ENCODE measurements at regions of chr9 and their contacts with region 1.

Region 1: GRCh38 chr9:68507130-68507805 is 33.4 kb downstream of the TMEM252 start:
- DNase-seq: no peak
- ATAC-seq: peak in 2 of 4 donors; percentile 25 to 34
- H3K4me3 ChIP-seq: no peak overlapping the region
- H3K27ac ChIP-seq: peak overlapping the region in 10 of 12 donors; percentile 2 to 75 (median 60)
- H3K4me1 ChIP-seq: peaks cover 0 to 53% (median 28%) of the 10 kb centered on the region in 12 donors
- H3K27me3 ChIP-seq: no peaks in the 10 kb centered on the region
- CTCF ChIP-seq: peak; percentile 54 to 78 (median 72)
- POLR2A ChIP-seq: no peak

Region 2: DNA sequence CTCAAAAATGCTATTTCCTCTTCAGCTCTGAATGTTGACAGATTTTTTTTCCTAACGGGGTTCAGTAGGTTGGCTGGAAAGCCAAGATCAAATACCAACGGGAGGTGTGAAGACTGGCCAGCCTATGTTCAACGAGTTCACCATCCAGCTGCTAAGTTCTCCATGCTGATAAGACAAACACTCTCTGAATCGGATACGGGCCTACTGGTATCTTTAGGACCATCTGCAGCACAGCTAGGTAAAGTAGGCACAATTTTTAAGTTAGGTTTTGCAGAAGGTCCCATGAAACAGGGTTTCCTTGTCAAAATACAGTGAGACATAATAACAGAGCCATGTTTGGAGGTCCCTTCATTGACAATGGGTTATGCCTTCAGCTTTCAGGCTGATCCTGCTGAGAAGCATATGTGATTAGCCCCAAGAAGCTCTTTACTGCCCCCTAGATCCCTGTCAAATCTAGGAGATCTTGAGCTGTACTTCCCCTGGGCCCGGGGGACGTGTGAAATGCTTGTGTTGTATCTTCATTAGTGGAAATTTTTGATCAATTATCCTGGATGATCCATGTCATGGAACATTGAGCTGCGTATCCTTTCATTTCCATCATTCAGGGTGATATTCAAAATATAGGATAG is 90.2 kb before region 1 on chr9:
- intact Hi-C with region 1: loop called in 2 of 10 experiments (anchors 5 to 10 kb)
- DNase-seq: no peak
- ATAC-seq: no peak
- H3K4me3 ChIP-seq: no peak overlapping the region
- H3K27ac ChIP-seq: peak overlapping the region; percentile 34 to 93 (median 86)
- H3K4me1 ChIP-seq: peaks cover 0 to 52% (median 17%) of the 10 kb centered on the region in 12 donors
- H3K27me3 ChIP-seq: no peaks in the 10 kb centered on the region
- CTCF ChIP-seq: peak in 7 of 12 donors; percentile 10 to 30 (median 23)
- POLR2A ChIP-seq: no peak

Region 3: GRCh38 chr9:68437785-68438184 is 69.5 kb before region 1 on chr9:
- intact Hi-C with region 1: loop called in 1 of 10 experiments (anchors 5 kb)
- DNase-seq: peak; percentile 67 to 87 (median 81)
- ATAC-seq: peak; percentile 96 to 97 (median 96)
- H3K4me3 ChIP-seq: no peak overlapping the region
- H3K27ac ChIP-seq: peak overlapping the region in 10 of 12 donors; percentile 6 to 78 (median 50)
- H3K4me1 ChIP-seq: peaks cover 0 to 25% (median 16%) of the 10 kb centered on the region in 12 donors
- H3K27me3 ChIP-seq: no peaks in the 10 kb centered on the region
- CTCF ChIP-seq: no peak
- POLR2A ChIP-seq: no peak

Region 4: DNA sequence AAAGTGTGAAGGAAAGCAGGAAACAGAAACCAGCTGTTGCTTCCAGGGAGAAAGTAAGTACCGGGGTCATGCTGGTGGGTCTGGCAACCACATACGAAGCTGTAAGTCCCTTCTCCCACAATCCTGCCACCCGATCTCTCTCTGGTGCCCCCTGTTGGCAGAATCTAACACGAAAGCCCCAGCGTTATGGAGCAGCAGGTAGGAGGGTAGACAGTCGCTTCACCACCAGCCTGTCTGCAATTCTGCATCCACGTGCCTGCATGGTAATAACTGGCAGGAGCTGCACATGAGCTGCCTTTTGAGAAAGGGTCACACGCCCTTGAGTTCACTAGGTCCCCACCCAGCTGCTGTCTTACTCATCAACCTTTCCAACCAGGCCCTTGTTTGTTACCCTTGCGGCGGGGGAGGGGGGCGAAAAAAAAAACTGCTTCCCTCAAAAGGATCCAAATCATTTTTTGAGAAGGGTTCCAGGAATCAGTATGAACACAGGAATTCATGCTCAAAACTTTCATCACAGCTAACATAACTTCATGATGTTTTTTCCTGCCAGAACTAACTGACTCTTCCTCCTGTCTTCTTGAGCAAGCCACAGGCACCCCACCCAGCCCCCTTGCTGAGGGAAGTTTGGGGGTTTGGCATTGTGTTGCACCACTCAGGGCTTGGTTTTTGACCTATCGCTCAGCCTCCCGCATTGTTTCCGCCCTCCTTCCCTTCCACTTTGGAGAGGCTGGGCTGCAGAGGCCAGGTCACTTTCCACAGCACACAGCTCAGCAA is 53.0 kb after region 1 on chr9:
- intact Hi-C with region 1: loop called in 4 of 10 experiments (anchors 5 to 10 kb)
- DNase-seq: peak; percentile 46 to 69 (median 55)
- ATAC-seq: peak; percentile 21 to 78 (median 70)
- H3K4me3 ChIP-seq: peak overlapping the region in 1 of 12 donors; percentile 17
- H3K27ac ChIP-seq: peak overlapping the region in 6 of 12 donors; percentile 2 to 69 (median 38)
- H3K4me1 ChIP-seq: peaks cover 0 to 26% (median 7%) of the 10 kb centered on the region in 12 donors
- H3K27me3 ChIP-seq: no peaks in the 10 kb centered on the region
- CTCF ChIP-seq: peak in 10 of 12 donors; percentile 29 to 57 (median 42)
- POLR2A ChIP-seq: no peak

Region 5: GRCh38 chr9:68567565-68567964 is 60.3 kb after region 1 on chr9:
- intact Hi-C with region 1: loop called in 6 of 10 experiments (anchors 5 to 10 kb)
- DNase-seq: no peak
- ATAC-seq: peak in 2 of 4 donors; percentile 25 to 50
- H3K4me3 ChIP-seq: no peak overlapping the region
- H3K27ac ChIP-seq: peak overlapping the region in 6 of 12 donors; percentile 30 to 77 (median 50)
- H3K4me1 ChIP-seq: peaks cover 0 to 13% (median 0%) of the 10 kb centered on the region in 12 donors
- H3K27me3 ChIP-seq: no peaks in the 10 kb centered on the region
- CTCF ChIP-seq: no peak
- POLR2A ChIP-seq: no peak

Region 6: GRCh38 chr9:68574150-68574549 is 66.9 kb after region 1 on chr9:
- intact Hi-C with region 1: loop called in 5 of 10 experiments (anchors 5 to 10 kb)
- DNase-seq: no peak
- ATAC-seq: no peak
- H3K4me3 ChIP-seq: no peak overlapping the region
- H3K27ac ChIP-seq: no peak overlapping the region
- H3K4me1 ChIP-seq: peaks cover 0 to 4% (median 0%) of the 10 kb centered on the region in 12 donors
- H3K27me3 ChIP-seq: no peaks in the 10 kb centered on the region
- CTCF ChIP-seq: peak in 10 of 12 donors; percentile 15 to 56 (median 39)
- POLR2A ChIP-seq: no peak

Measured in heart left ventricle (tissue), 16 donors.